ENCODE measurements at regions of chr6 and their contacts with region 1.

Region 1: GRCh38 chr6:130885392-130886192 is 58.4 kb downstream of the SMLR1 start:
- DNase-seq: peak; percentile 58 to 83
- H3K4me3 ChIP-seq: no peak overlapping the region
- H3K27ac ChIP-seq: no peak overlapping the region
- H3K4me1 ChIP-seq: no peaks in the 10 kb centered on the region
- H3K27me3 ChIP-seq: no peaks in the 10 kb centered on the region
- CTCF ChIP-seq: peak; percentile 88 to 95 (median 92)
- POLR2A ChIP-seq: no peak

Region 2: GRCh38 chr6:130708338-130708737 is 177.3 kb before region 1 on chr6:
- intact Hi-C with region 1: no loop called
- DNase-seq: no peak
- H3K4me3 ChIP-seq: no peak overlapping the region
- H3K27ac ChIP-seq: no peak overlapping the region
- H3K4me1 ChIP-seq: no peaks in the 10 kb centered on the region
- H3K27me3 ChIP-seq: no peaks in the 10 kb centered on the region
- CTCF ChIP-seq: no peak
- POLR2A ChIP-seq: no peak

Region 3: GRCh38 chr6:131116749-131117360 is 231.3 kb after region 1 on chr6:
- intact Hi-C with region 1: loop called (anchors 5 kb)
- DNase-seq: no peak
- H3K4me3 ChIP-seq: no peak overlapping the region
- H3K27ac ChIP-seq: no peak overlapping the region
- H3K4me1 ChIP-seq: no peaks in the 10 kb centered on the region
- H3K27me3 ChIP-seq: no peaks in the 10 kb centered on the region
- CTCF ChIP-seq: peak; percentile 46 to 70 (median 57)
- POLR2A ChIP-seq: no peak